A549 (cell line): ENCODE measurements at regions of chr11 and their contacts with region 1.

Region 1: DNA sequence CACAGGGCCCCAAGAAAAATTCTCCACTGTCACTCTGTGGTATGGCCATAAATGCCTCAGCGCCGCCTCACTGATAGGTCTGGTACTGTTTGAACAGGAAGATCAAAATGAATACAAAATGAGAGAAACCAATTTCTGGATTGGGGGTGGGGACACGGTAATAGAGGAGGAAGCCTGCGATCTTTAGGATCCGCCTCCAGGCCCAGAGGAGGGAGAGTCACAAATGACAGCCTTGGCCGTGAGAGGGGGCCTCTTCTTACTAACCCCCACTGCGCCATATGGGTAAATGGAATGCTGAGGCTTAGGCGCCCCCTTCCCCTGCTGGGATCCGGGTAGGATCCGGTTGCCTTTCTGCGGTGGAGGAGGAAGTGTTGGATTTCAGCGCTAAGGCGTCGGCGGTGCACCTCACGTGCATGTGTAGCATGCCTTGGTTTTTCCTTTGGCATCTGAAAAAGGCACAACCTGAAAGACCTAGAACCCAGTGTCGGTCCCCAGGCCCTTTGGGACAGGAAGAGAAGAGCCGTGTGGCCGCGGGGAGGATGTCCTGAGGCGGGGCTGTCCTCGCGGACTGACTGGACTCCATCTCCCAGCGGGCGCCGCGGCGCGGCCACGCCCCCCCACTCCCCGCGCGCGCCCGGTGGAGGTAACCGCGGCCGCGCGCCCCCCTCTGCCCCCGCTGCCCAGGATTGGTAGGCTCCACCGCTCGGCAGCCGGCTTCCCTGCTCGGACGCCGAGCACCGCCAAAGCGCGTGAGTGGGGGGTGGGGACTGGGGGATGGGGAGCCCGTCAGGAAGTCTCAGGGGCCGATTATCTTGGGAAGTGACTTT is 718 bp upstream of the MADD start:
- DNase-seq: peak; percentile 88 to 89
- ATAC-seq: peak; percentile 83 to 86
- H3K4me3 ChIP-seq: peak overlapping the region; percentile 72
- H3K27ac ChIP-seq: peak overlapping the region; percentile 95 to 99
- H3K4me1 ChIP-seq: peaks cover 30% of the 10 kb centered on the region
- CTCF ChIP-seq: no peak; the same call in 2 of the 3 replicates
- EP300 ChIP-seq: no peak
- POLR2A ChIP-seq: peak; percentile 55
- RAD21 ChIP-seq: peak in 1 of 2 experiments; percentile 8; a peak in 1 of 5 replicates

Region 2: DNA sequence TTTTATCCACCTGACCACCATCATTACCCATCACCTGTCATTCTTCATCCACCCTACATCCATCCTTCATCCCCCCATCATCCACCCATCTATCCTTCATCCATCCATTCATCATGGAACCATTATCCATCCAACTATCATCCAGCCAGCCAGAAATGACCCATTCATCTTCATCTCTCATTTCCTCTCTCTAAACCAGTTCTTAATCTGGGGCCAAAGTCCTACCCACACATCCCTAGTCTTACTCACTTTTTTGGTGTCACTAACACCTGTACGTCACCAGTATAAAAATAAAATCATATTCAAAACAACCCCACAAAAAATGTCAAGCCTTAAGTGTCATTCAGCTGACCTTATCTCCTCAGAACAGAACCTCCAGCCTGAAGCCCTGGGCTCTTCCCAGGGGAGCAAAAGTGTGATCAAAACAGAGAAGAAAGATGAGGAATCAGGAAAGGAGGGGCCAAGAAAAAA is 96.8 kb after region 1 on chr11:
- CTCF ChIA-PET with region 1: no interaction called
- POLR2A ChIA-PET with region 1: interaction called, 13 read pairs
- DNase-seq: no peak
- ATAC-seq: no peak
- H3K4me3 ChIP-seq: no peak overlapping the region
- H3K27ac ChIP-seq: no peak overlapping the region
- H3K4me1 ChIP-seq: no peaks in the 10 kb centered on the region
- CTCF ChIP-seq: no peak
- EP300 ChIP-seq: no peak
- POLR2A ChIP-seq: no peak
- RAD21 ChIP-seq: no peak

Region 3: DNA sequence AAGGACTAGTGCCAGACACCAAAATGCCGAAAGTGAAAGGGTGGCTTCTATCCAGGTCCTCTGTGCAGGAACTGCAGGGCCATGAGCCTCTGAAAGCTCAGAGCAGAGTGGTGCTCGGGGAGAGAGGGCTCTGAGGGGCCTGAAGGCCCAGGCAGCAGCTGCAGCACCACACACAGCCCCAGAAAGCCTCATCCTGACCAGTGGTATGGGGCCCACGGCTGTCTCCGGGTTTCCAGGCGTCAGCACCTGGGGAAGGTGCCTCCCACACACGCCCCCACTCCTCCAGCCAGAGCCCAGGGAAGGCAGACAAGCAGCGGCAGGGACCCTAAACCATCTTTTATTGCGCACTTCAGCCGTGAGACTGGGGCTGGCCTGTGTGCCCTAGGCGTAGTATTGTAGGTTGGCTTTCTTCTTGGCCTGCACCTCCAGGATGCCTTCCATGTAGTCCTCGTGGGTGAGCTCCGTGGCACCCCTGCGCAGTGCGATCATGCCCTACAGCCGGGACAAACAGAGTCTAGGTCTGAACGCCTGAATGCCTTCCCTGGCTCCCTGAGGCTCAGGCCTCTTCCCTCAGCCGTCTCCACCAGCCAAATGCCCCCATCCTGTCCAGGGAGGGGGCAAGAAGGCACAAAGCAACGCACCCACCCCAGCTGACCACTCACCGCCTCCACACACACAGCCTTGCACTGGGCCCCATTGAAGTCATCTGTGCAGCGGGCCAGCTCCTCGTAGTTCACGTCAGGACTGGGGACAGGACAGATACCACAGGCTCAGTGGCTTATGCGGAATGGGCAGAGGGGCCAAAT is 149.4 kb after region 1 on chr11:
- CTCF ChIA-PET with region 1: no interaction called
- POLR2A ChIA-PET with region 1: no interaction called
- DNase-seq: no peak
- ATAC-seq: peak in 1 of 2 experiments; percentile 2; a peak in 2 of 6 replicates
- H3K4me3 ChIP-seq: no peak overlapping the region
- H3K27ac ChIP-seq: no peak overlapping the region
- H3K4me1 ChIP-seq: peaks cover 11% of the 10 kb centered on the region
- CTCF ChIP-seq: no peak
- EP300 ChIP-seq: no peak
- POLR2A ChIP-seq: no peak
- RAD21 ChIP-seq: no peak